Dendritic cell treated with granulocyte-macrophage colony-stimulating factor and Interleukin-4, amounts not matched to agents 40 ng/mL and 50 ng/mL, for 4 days (primary cell): ENCODE measurements at regions of chr9 and their contacts with region 1.

Region 1: DNA sequence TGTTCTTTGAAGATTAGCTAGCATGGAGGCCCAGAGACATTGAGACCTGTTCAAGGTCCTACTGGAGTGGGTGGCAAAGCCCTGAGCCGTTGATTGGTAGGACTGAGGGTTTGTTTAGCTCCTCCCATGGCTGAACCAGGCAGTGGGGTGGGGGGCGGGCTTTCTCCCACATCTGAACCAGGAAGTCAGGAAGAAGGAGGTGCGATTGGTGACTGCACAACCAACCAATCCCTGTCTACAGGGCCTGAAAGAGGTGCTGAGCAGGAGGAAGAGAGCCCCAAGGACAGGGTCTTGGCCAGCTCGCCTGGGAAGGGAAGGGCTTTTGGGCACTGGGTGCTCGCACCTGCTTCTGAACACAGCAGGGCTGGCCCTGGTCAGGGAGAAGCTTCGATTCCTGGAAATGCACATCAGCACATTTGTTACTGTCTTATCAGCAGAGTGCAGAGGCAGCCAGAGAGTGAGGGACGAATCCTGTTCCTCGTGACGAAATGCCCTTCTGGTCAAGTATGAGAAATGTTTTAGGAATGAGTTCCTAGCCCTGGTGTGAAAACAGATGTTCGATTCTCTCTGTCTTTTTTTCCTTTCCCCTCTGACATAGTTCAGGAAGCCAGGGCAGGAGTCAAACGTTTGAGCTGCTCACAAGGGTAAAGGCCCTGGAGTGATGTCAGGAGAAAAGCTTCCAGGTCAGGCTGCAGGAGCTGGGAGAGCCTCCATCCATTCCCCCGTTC is 294.8 kb upstream of the KLF4 start:
- H3K4me3 Mint-ChIP-seq: no peak overlapping the region
- H3K27ac Mint-ChIP-seq: peak overlapping the region; percentile 96
- H3K4me1 Mint-ChIP-seq: peaks cover 40% of the 10 kb centered on the region
- H3K27me3 Mint-ChIP-seq: no peaks in the 10 kb centered on the region

Region 2: GRCh38 chr9:107700847-107701246 is 83.5 kb before region 1 on chr9:
- intact Hi-C with region 1: no loop called
- H3K4me3 Mint-ChIP-seq: peak overlapping the region; percentile 52
- H3K27ac Mint-ChIP-seq: peak overlapping the region; percentile 31
- H3K4me1 Mint-ChIP-seq: peaks cover 42% of the 10 kb centered on the region
- H3K27me3 Mint-ChIP-seq: no peaks in the 10 kb centered on the region

Region 3: DNA sequence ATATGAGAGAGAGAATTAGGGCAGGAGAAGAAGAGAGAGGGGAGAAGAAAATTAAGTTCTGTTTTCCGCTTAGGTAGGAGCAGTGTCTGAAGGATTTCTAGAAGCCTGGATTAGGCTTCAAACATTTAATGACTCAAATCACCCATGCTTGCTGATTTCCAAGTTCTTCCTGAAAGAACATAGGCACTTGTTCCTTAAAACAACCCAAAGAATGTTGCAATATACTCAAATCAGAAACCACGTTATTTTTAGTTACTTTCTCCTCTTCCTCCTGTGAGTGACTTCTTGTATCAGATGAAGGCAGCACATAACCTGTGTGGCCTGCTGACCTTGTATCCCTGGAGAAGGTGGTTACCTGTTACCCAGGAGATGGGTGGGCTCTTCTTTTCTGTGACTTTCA is 56.7 kb after region 1 on chr9:
- intact Hi-C with region 1: no loop called
- H3K4me3 Mint-ChIP-seq: no peak overlapping the region
- H3K27ac Mint-ChIP-seq: peak overlapping the region; percentile 39
- H3K4me1 Mint-ChIP-seq: peaks cover 51% of the 10 kb centered on the region
- H3K27me3 Mint-ChIP-seq: peaks cover 17% of the 10 kb centered on the region

Region 4: GRCh38 chr9:107862323-107862722 is 77.9 kb after region 1 on chr9:
- intact Hi-C with region 1: loop called (anchors 5 kb)
- H3K4me3 Mint-ChIP-seq: no peak overlapping the region
- H3K27ac Mint-ChIP-seq: peak overlapping the region; percentile 84
- H3K4me1 Mint-ChIP-seq: peaks cover 52% of the 10 kb centered on the region
- H3K27me3 Mint-ChIP-seq: no peaks in the 10 kb centered on the region